Calu3 (cell line): ENCODE measurements at regions of chr2 and their contacts with region 1.

Region 1: GRCh38 chr2:9142551-9143263 is 63.9 kb upstream of the ASAP2 start:
- DNase-seq: peak; percentile 96
- H3K4me3 Mint-ChIP-seq: peak overlapping the region; percentile 45
- H3K27ac Mint-ChIP-seq: no peak overlapping the region
- H3K4me1 Mint-ChIP-seq: peaks cover 18% of the 10 kb centered on the region
- H3K27me3 Mint-ChIP-seq: no peaks in the 10 kb centered on the region
- CTCF ChIP-seq: peak; percentile 97

Region 2: DNA sequence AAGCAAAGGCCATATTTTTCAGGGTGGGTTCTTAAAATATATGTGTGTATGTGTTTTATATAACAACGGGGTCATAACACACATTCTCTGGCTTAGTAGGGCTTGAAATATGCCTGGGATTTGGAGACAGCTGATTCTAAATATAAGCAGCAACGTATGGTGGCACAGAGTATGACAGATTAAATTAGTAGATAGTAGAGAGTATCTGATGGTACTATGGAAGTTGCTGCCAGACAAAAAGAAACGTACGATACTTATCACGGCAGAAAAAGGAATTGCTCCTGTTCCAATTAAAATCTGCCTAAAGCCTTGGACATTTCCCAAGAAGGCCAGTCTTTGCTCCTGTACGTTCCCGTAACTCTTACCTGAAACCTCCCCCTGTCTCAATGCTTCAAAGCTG is 1068.8 kb before region 1 on chr2:
- CTCF ChIA-PET with region 1: no interaction called
- intact Hi-C with region 1: no loop called
- DNase-seq: no peak
- H3K4me3 Mint-ChIP-seq: no peak overlapping the region
- H3K27ac Mint-ChIP-seq: no peak overlapping the region
- H3K4me1 Mint-ChIP-seq: no peaks in the 10 kb centered on the region
- H3K27me3 Mint-ChIP-seq: no peaks in the 10 kb centered on the region
- CTCF ChIP-seq: no peak

Region 3: DNA sequence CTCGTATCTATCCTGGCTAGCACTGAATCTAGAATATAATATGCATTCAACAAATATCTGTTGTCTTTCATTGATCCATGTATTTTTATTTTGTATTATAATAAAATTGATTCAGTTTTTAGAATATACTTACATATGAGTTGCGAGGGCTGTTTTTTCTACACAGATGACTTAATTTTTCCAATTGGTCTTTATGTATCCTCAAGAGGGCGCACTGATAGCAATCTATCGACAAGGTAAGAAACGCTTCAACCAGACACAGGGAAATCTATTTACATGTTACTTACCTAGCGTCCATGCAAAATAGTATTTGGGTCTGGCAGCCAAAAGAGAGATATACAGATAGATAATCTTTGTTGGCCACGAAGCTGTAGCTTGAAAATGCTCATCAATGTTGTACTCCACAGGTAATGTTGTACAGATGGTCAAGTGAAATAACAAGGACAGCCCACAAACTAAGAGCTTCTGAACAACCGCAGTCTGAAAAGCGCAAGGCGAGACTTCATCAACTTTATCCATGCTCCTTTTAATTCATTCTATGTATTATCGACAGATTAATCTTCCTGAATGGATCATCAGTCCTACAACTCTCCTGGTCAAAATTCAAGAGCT is 269.8 kb before region 1 on chr2:
- CTCF ChIA-PET with region 1: interaction called, 7 read pairs
- intact Hi-C with region 1: loop called (anchors 1 kb)
- DNase-seq: peak; percentile 11
- H3K4me3 Mint-ChIP-seq: no peak overlapping the region
- H3K27ac Mint-ChIP-seq: no peak overlapping the region
- H3K4me1 Mint-ChIP-seq: no peaks in the 10 kb centered on the region
- H3K27me3 Mint-ChIP-seq: no peaks in the 10 kb centered on the region
- CTCF ChIP-seq: peak; percentile 47

Region 4: GRCh38 chr2:9243357-9243756 is 100.7 kb after region 1 on chr2:
- CTCF ChIA-PET with region 1: no interaction called
- intact Hi-C with region 1: no loop called
- DNase-seq: no peak
- H3K4me3 Mint-ChIP-seq: no peak overlapping the region
- H3K27ac Mint-ChIP-seq: peak overlapping the region; percentile 44
- H3K4me1 Mint-ChIP-seq: peaks cover 77% of the 10 kb centered on the region
- H3K27me3 Mint-ChIP-seq: no peaks in the 10 kb centered on the region
- CTCF ChIP-seq: no peak

Region 5: GRCh38 chr2:9287400-9288043 is 144.8 kb after region 1 on chr2:
- CTCF ChIA-PET with region 1: no interaction called
- intact Hi-C with region 1: loop called (anchors 5 kb)
- DNase-seq: peak; percentile 77
- H3K4me3 Mint-ChIP-seq: peak overlapping the region; percentile 51
- H3K27ac Mint-ChIP-seq: peak overlapping the region; percentile 86
- H3K4me1 Mint-ChIP-seq: peaks cover 82% of the 10 kb centered on the region
- H3K27me3 Mint-ChIP-seq: no peaks in the 10 kb centered on the region
- CTCF ChIP-seq: no peak

Region 6: GRCh38 chr2:9333591-9334171 is 191.0 kb after region 1 on chr2:
- CTCF ChIA-PET with region 1: interaction called, 10 read pairs
- intact Hi-C with region 1: loop called (anchors 1 kb)
- DNase-seq: peak; percentile 74
- H3K4me3 Mint-ChIP-seq: no peak overlapping the region
- H3K27ac Mint-ChIP-seq: peak overlapping the region; percentile 76
- H3K4me1 Mint-ChIP-seq: peaks cover 61% of the 10 kb centered on the region
- H3K27me3 Mint-ChIP-seq: no peaks in the 10 kb centered on the region
- CTCF ChIP-seq: peak; percentile 35